ENCODE measurements at regions of chr3 and their contacts with region 1.

Region 1: GRCh38 chr3:195894780-195895607 is 13.4 kb downstream of the TNK2 start:
- DNase-seq: peak in 8 of 10 donors; percentile 36 to 75 (median 56)
- H3K4me3 ChIP-seq: peak overlapping the region; percentile 50 to 95 (median 84)
- H3K27ac ChIP-seq: peak overlapping the region; percentile 72 to 98 (median 96)
- H3K27me3 ChIP-seq: no peaks in the 10 kb centered on the region
- CTCF ChIP-seq: peak; percentile 72 to 98 (median 92)

Region 2: GRCh38 chr3:195868866-195869412 is 26.1 kb before region 1 on chr3:
- intact Hi-C with region 1: loop called in 1 of 2 experiments (anchors 2 kb)
- DNase-seq: no peak
- H3K4me3 ChIP-seq: no peak overlapping the region
- H3K27ac ChIP-seq: peak overlapping the region in 17 of 59 donors; percentile 5 to 60 (median 42)
- H3K27me3 ChIP-seq: no peaks in the 10 kb centered on the region
- CTCF ChIP-seq: no peak

Region 3: DNA sequence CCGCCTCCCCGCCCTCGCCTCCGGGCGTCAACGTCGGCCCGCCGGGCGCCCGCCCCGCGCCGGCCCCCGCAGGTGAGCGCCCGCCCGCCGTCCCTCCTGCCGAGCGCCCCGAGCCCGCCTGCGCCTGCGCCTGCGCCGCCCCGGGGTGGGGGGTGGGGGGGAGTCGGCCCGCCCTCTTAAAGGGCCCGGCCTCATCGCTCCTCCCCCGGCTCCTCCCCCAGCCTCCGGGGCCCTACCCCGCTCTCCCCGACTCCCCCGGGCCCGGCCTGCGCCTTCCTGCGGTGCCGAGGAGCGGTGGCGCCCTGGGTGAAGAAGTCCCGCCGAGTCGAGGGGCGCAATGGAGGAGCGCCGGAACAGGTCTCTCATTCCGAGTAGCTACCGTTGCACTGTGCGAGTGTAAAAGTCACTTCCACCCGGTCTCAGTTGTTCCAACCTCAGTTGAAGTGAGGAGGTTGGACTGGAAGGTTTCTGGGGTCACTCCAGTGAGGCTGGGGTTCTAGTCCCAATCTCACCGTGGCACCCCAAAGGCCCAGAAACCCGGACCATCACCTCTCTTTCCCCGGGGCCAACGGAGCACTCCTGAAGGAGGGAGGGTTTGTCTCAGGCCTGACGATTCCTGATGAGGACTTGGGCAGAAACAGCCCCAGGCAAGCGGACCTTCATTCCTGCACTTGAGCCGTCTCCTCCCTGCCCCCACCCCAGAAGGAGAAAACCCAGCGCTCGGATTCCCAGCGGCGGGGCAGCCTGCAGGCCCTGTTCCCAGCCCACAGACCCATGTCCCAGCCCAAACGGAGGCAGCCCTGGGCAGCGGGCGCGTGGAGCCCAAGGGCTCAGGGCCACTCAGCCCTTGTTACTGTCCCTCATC is 14.9 kb after region 1 on chr3:
- intact Hi-C with region 1: loop called (anchors 1 to 2 kb)
- DNase-seq: peak; percentile 74 to 91 (median 85)
- H3K4me3 ChIP-seq: peak overlapping the region; percentile 37 to 84 (median 71)
- H3K27ac ChIP-seq: peak overlapping the region in 53 of 59 donors; percentile 29 to 90 (median 77)
- H3K27me3 ChIP-seq: no peaks in the 10 kb centered on the region
- CTCF ChIP-seq: peak in 26 of 56 donors; percentile 4 to 43 (median 22)

Measured in dorsolateral prefrontal cortex (tissue), 120 donors.